ENCODE measurements at regions of chr3 and their contacts with region 1.

Region 1: DNA sequence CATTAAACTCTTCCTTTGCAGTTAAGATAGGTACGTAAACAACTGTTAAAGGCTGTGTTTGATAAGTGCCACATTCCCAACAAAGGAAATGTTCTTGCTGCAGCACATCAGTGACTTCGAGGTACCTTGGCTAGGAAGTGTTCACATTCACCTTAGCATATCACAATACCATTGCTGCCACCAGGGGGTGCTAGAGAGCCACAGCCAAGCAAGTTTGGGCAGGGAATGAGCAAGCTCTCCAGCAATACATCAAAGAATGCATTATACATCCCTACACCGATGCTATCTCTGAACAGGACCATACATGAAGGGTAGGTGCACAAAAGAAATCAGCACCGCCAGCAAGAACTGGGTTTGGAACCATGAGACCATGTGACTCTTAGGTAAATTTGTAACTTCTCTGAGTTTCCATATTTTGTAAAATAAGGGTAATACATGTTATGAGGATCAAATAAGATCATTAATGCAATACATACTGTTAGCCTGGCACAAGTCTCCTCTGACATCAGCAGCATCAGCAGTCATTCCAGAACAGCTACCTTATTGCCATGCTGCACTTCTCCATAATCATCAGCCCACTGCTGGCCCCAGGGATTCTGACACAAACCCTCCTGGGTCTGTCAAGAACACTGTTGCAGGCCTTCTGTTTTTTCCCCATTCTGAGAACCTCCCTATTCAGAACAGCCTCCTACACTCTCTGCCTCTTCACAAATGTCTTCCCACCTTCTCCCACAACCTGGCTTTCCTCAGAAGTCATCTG is 37.6 kb downstream of the RYK start:
- DNase-seq: peak; percentile 51
- ATAC-seq: peak; percentile 97
- H3K4me3 ChIP-seq: no peak overlapping the region
- H3K27ac ChIP-seq: no peak overlapping the region
- H3K4me1 ChIP-seq: no peaks in the 10 kb centered on the region; the same call in 1 of the 2 replicates
- H3K27me3 ChIP-seq: no peaks in the 10 kb centered on the region
- CTCF ChIP-seq: peak; percentile 90 to 96 (median 96)
- EP300 ChIP-seq: no peak
- POLR2A ChIP-seq: no peak
- RAD21 ChIP-seq: peak; percentile 85

Region 2: DNA sequence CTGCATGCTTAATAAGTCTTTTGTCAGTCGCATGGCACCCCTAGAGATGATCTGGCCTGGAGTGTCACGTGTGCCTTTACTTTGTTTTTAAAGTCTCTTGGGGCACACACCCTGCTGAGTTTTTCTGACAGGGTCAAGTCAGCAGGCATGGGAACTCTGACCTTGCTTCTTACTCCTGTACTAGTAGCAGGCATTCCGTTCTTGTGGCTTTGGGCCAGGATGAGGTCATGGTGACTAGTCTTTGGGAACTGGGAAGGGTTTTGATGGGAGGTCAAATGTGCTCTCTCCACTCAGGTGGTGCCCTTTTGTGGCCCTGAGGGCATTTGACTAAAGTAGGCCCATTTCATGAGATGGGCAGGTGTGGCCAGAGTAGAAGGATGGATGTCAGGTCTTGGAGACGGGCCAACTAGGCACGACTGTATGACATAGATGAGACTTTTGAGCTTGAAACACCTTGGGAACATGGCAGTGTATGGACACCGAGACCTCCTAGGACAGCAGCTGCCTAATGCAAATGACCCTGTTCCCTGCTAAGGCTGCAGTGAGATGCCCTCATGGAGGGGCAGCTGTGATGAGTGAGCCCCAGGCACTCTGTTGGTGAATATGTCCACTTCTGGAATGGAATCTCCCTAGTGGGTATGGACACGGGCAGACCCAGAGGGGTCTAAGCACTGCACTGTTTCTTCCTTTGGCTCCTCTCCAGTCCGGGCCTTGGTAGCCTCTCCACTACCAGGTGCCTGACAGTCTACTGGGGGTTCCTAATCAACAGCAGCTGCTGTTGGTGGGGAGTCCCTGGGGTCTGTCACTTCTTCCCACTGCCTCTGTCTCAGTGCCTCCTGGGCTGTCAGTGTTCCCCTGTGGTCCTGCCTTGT is 391.1 kb before region 1 on chr3:
- CTCF ChIA-PET with region 1: interaction called, 15 read pairs
- POLR2A ChIA-PET with region 1: no interaction called
- RAD21 ChIA-PET with region 1: no interaction called
- SMC1A ChIA-PET with region 1: interaction called, 5 read pairs
- in situ Hi-C with region 1: loop called (anchors 10 kb)
- intact Hi-C with region 1: no loop called
- DNase-seq: no peak
- ATAC-seq: peak; percentile 26; the same call in 1 of the 3 replicates
- H3K4me3 ChIP-seq: no peak overlapping the region
- H3K27ac ChIP-seq: no peak overlapping the region
- H3K4me1 ChIP-seq: no peaks in the 10 kb centered on the region
- H3K27me3 ChIP-seq: no peaks in the 10 kb centered on the region
- CTCF ChIP-seq: 0 out of 6 replicates have a peak, but pooled peaks of 2 of the 3 experiments have one; percentile 9 to 17
- EP300 ChIP-seq: no peak
- POLR2A ChIP-seq: peak; percentile 53
- RAD21 ChIP-seq: no peak

Region 3: GRCh38 chr3:134197681-134198261 is 15.3 kb before region 1 on chr3:
- CTCF ChIA-PET with region 1: interaction called, 137 read pairs
- POLR2A ChIA-PET with region 1: no interaction called
- RAD21 ChIA-PET with region 1: interaction called, 13 read pairs
- SMC1A ChIA-PET with region 1: interaction called, 9 read pairs
- in situ Hi-C with region 1: no loop called
- intact Hi-C with region 1: no loop called
- DNase-seq: peak; percentile 24
- ATAC-seq: peak; percentile 92
- H3K4me3 ChIP-seq: no peak overlapping the region
- H3K27ac ChIP-seq: no peak overlapping the region
- H3K4me1 ChIP-seq: no peaks in the 10 kb centered on the region
- H3K27me3 ChIP-seq: no peaks in the 10 kb centered on the region
- CTCF ChIP-seq: peak; percentile 68 to 81 (median 76)
- EP300 ChIP-seq: no peak
- POLR2A ChIP-seq: no peak
- RAD21 ChIP-seq: peak; percentile 75

Region 4: DNA sequence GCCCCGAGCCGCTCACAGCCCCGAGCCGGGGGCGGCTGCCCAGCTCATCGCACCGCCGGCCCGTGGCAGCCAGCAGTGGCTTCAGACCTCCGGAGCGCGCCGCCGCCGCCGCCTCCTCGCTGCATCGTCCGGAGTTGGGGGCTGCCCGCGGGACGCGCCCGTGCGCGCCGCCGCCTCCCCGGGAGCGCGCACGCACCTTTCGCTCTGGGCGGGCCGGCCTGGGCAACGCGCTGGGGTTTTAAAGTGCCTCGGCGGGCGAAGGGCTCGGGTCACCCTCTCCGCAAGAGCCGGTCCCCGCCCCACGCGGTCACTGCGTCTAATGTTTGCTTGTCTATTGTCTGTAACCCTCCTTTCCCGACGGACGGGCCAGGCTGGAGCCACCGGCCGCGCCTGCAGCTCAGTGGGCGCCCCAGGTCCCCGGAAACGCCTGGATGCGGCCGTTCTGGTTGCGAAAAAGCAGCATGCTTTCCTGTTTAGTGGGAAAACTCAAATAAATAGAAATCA is 37.7 kb after region 1 on chr3 and contains the start of gene RYK:
- CTCF ChIA-PET with region 1: interaction called, 13 read pairs
- POLR2A ChIA-PET with region 1: no interaction called
- RAD21 ChIA-PET with region 1: interaction called, 3 read pairs
- SMC1A ChIA-PET with region 1: interaction called, 4 read pairs
- in situ Hi-C with region 1: no loop called
- intact Hi-C with region 1: no loop called
- DNase-seq: no peak
- ATAC-seq: peak; percentile 86
- H3K4me3 ChIP-seq: peak within 1 kb of the TSS; percentile 76
- H3K27ac ChIP-seq: no peak within 1 kb of the TSS
- H3K4me1 ChIP-seq: peaks cover 9% of the 10 kb centered on the region
- H3K27me3 ChIP-seq: no peaks in the 10 kb centered on the region
- CTCF ChIP-seq: no peak
- EP300 ChIP-seq: no peak
- POLR2A ChIP-seq: peak; percentile 83
- RAD21 ChIP-seq: no peak
- polyA plus RNA-seq, gene RYK: 3.4 to 4.3 TPM

Region 5: DNA sequence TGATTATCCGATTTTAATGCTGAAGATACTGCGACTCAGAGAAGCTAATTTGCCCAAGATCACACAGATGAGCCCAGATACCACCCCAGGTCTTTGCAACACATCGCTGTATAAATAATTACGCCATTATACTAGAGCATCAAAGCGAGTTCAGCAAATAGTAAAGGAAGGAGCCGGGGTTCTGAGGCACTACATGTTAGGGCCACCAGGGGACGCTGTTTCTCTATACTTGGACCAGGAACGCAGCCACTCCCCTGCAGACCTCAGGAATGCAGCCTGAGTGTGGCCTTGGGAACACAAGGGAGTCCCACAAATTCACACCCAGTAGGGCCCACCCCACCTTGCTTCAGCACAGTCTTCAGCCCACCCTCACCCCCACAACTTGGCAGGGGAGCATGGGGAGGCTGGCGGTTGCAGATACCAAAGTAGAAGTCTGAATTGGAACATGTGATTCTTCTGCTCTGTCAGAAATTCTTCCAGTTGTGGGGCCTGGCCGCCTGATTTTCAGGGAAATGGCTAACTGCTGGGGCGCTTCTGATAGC is 95.3 kb after region 1 on chr3:
- CTCF ChIA-PET with region 1: interaction called, 23 read pairs
- POLR2A ChIA-PET with region 1: no interaction called
- RAD21 ChIA-PET with region 1: interaction called, 8 read pairs
- SMC1A ChIA-PET with region 1: no interaction called
- in situ Hi-C with region 1: no loop called
- intact Hi-C with region 1: loop called (anchors 5 kb)
- DNase-seq: peak; percentile 8
- ATAC-seq: peak; percentile 95
- H3K4me3 ChIP-seq: no peak overlapping the region
- H3K27ac ChIP-seq: no peak overlapping the region
- H3K4me1 ChIP-seq: no peaks in the 10 kb centered on the region
- H3K27me3 ChIP-seq: peaks cover 4 to 7% of the 10 kb centered on the region in 2 experiments
- CTCF ChIP-seq: peak; percentile 96 to 99 (median 99)
- EP300 ChIP-seq: no peak
- POLR2A ChIP-seq: no peak
- RAD21 ChIP-seq: peak; percentile 93

Region 6: DNA sequence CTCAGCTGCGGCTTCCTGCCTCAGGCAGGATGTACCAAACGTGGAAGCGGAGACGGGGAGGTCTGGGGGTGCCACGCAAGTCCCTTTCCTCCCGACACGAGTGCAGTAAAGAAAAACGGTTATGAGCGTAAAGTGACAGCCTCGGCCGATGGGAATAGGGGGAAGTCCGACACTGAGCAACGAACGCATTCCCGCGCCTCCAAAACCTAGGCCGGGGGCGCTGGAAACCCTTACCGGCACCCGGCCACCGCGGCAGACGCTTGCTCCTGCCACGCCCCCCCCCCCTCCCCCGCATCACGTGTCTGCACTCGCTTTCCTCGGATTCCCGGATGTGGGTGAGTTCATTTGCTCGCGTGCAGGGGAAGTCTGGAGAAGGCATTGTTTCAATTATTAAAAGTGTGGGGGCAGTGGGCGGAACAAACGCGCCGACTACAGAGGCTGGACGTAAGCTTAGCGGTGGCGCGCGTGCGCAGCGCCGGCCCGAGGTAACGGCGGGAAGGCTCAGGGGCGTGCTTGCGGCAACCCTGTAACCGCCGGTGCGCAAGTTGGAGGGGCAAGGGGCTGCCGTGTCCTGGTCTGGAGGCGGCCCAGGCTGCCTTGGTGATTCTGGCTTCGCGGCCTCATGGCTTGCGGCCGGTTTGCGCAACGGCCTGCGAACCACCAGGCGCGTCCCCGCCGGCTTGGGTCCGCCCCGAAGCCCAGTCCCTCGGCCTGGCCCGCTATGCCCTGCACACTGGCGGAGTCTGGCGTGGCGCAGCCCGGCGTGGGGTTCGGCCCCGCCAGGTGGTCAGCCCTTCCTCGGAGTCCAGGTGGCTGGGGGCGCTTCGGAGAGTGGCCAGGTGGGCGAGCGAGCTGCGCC is 272.9 kb after region 1 on chr3 and contains the starts of genes ANAPC13 and CEP63:
- CTCF ChIA-PET with region 1: interaction called, 12 read pairs
- POLR2A ChIA-PET with region 1: interaction called, 3 read pairs
- RAD21 ChIA-PET with region 1: interaction called, 4 read pairs
- SMC1A ChIA-PET with region 1: interaction called, 5 read pairs
- in situ Hi-C with region 1: loop called (anchors 5 kb)
- intact Hi-C with region 1: no loop called
- DNase-seq: peak; percentile 96
- ATAC-seq: peak; percentile 90
- H3K4me3 ChIP-seq: peak within 1 kb of the TSS; percentile 82
- H3K27ac ChIP-seq: peak within 1 kb of the TSS; percentile 87
- H3K4me1 ChIP-seq: peaks cover 6% of the 10 kb centered on the region
- H3K27me3 ChIP-seq: no peaks in the 10 kb centered on the region
- CTCF ChIP-seq: no peak
- EP300 ChIP-seq: 0 out of 4 replicates have a peak, but pooled peaks of 1 of the 2 experiments have one; percentile 7
- POLR2A ChIP-seq: peak; percentile 89
- RAD21 ChIP-seq: no peak
- polyA plus RNA-seq, gene ANAPC13: 129 to 139 TPM
- polyA plus RNA-seq, gene CEP63: 14.0 to 16.4 TPM

Measured in GM12878 (cell line).